Activated CD4-positive, alpha-beta T cell treated with anti-CD3 and anti-CD28 coated beads, Interleukin-2, amount 10 ng/mL, durations not matched to agents 7 days and 5 days (primary cell): ENCODE measurements at regions of chr2 and their contacts with region 1.

Region 1: GRCh38 chr2:208254871-208255556 is at the start of gene IDH1:
- DNase-seq: peak; percentile 95
- H3K4me3 Mint-ChIP-seq: peak within 1 kb of the TSS; percentile 92
- H3K27ac Mint-ChIP-seq: peak within 1 kb of the TSS; percentile 79
- H3K4me1 Mint-ChIP-seq: peaks cover 36% of the 10 kb centered on the region
- H3K27me3 Mint-ChIP-seq: no peaks in the 10 kb centered on the region
- total RNA-seq, gene IDH1: 25.1 to 27.3 TPM

Region 2: GRCh38 chr2:208175069-208175839 is 79.8 kb before region 1 on chr2:
- CTCF ChIA-PET with region 1: interaction called, 10 read pairs
- POLR2A ChIA-PET with region 1: no interaction called
- DNase-seq: peak; percentile 63
- H3K4me3 Mint-ChIP-seq: no peak overlapping the region
- H3K27ac Mint-ChIP-seq: no peak overlapping the region
- H3K4me1 Mint-ChIP-seq: peaks cover 5% of the 10 kb centered on the region
- H3K27me3 Mint-ChIP-seq: peaks cover under 1% of the 10 kb centered on the region

Region 3: GRCh38 chr2:208265801-208266552 is 11.0 kb after region 1 on chr2 and contains the start of gene PIKFYVE:
- CTCF ChIA-PET with region 1: interaction called, 28 read pairs
- POLR2A ChIA-PET with region 1: interaction called, 3 read pairs
- DNase-seq: peak; percentile 93
- H3K4me3 Mint-ChIP-seq: peak within 1 kb of the TSS; percentile 84
- H3K27ac Mint-ChIP-seq: peak within 1 kb of the TSS; percentile 97
- H3K4me1 Mint-ChIP-seq: peaks cover 43% of the 10 kb centered on the region
- H3K27me3 Mint-ChIP-seq: no peaks in the 10 kb centered on the region
- total RNA-seq, gene PIKFYVE: 32.7 to 34.7 TPM

Region 4: DNA sequence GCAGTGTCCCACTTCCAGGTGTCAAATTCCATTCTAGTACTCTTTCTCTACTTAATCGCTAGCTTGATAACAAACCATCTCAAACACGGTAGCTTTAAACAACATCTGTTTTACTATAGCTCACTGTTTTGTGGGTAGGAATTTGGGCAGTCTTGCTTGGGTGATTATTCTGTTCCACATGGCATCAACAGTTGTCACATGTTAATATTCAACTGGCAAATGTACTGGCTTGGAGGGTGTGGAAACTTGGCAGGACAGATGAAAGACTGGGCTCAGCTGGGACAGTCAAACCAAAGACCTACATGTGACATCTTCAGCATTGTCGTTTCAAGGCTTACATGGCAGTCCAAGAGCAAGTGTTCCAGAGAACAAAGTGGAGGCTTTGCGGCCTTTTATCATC is 393.4 kb after region 1 on chr2:
- CTCF ChIA-PET with region 1: no interaction called
- POLR2A ChIA-PET with region 1: no interaction called
- DNase-seq: no peak
- H3K4me3 Mint-ChIP-seq: no peak overlapping the region
- H3K27ac Mint-ChIP-seq: no peak overlapping the region
- H3K4me1 Mint-ChIP-seq: no peaks in the 10 kb centered on the region
- H3K27me3 Mint-ChIP-seq: no peaks in the 10 kb centered on the region